Panc1 (cell line): ENCODE measurements at regions of chr3 and their contacts with region 1.

Region 1: DNA sequence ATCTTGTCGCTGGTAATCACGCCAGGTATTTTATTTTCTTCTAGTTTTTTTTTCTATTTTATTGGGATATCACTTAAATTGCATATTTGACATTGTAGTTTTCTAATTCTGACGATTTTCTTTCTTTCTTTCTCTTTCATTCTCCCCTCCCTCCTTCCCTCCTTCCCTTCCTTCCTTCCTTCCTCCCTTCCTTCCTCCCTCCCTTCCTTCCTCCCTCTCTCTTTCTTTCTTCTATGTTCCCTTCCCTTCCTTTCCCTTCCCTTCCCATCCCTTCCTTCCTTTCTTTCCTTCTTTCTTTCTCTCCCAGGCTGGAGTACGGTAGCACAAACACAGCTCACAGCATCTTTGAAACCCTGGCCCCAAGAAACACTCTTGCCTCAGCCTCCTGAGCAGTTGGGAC is 100.6 kb upstream of the BCL6 start:
- DNase-seq: no peak
- ATAC-seq: no peak
- H3K4me3 ChIP-seq: no peak overlapping the region
- H3K27ac ChIP-seq: no peak overlapping the region
- H3K4me1 ChIP-seq: no peaks in the 10 kb centered on the region
- H3K27me3 ChIP-seq: peaks cover 2% of the 10 kb centered on the region; the same call in 1 of the 2 replicates
- CTCF ChIP-seq: no peak

Region 2: DNA sequence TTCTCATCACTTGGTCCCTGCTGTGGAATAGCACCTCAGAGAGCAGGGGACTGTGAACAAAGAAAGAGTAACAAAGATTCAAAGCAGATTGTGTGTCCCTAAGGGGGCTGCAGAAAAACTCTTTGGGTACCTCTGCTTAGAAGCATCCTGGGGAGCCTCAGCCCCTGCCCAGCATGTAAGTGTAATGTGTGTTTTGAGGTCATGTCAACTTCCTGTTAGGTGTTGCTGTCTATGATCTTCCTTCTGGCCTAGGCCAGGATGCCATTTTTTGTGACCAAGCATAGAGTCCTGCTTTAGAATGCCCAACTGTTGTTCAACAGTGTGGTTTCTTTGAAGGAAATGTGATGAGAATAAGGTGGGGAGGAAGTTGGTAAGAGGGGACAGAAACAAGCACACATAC is 23.4 kb before region 1 on chr3:
- CTCF ChIA-PET with region 1: no interaction called
- POLR2A ChIA-PET with region 1: no interaction called
- in situ Hi-C with region 1: no loop called
- intact Hi-C with region 1: no loop called
- DNase-seq: no peak
- ATAC-seq: no peak
- H3K4me3 ChIP-seq: no peak overlapping the region
- H3K27ac ChIP-seq: no peak overlapping the region
- H3K4me1 ChIP-seq: no peaks in the 10 kb centered on the region
- H3K27me3 ChIP-seq: peaks cover 3% of the 10 kb centered on the region; the same call in 1 of the 2 replicates
- CTCF ChIP-seq: no peak

Region 3: GRCh38 chr3:188092648-188093047 is 246.8 kb after region 1 on chr3:
- CTCF ChIA-PET with region 1: interaction called, 12 read pairs
- POLR2A ChIA-PET with region 1: no interaction called
- in situ Hi-C with region 1: no loop called
- intact Hi-C with region 1: no loop called
- DNase-seq: no peak
- ATAC-seq: no peak
- H3K4me3 ChIP-seq: no peak overlapping the region
- H3K27ac ChIP-seq: no peak overlapping the region
- H3K4me1 ChIP-seq: no peaks in the 10 kb centered on the region
- H3K27me3 ChIP-seq: no peaks in the 10 kb centered on the region
- CTCF ChIP-seq: no peak